WTC11 (cell line): ENCODE measurements at regions of chr7 and their contacts with region 1.

Region 1: DNA sequence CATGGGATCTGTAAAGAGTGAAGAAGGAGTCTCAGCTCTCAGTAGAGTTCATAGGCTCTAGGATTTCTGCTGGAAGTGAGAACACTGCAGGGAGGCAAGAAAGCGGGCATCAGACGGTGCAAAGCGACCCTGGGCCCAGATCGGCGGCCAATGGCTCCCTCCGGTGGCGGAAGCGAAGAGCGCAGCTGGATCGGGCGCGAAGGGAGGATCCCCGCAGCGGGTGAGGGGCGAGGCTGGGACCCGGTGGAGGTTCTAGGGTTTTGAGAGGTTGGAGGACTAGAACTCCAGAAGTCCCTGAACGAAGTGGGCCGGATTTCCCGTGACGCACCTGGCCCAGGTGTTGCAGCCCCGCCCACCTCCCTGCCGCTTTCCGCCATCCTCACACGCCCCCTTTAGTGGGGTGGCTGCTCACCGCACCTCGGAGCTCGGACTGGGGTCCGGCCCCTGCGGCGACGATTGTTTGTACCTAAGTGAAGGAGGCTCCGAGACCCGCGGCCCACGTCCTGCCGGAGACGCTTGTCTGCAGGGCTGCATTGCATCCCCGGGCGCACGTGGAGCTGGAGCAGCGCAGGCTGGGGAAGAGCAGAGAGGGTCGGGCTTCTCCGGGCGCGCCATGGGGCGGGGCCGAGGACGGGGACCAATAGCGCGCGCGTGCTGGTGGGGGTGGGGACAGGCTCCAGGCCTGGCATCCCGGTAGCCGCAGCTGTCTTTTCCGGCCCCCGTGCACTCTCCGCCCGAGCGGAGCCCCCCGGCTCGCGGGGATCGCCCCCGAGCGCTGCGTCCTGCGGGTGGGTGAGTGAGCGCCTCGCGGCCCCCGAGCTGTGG is at the start of gene SLC12A9:
- DNase-seq: peak; percentile 93
- ATAC-seq: peak; percentile 95
- H3K4me3 Mint-ChIP-seq: peak within 1 kb of the TSS; percentile 93
- H3K27ac Mint-ChIP-seq: peak within 1 kb of the TSS; percentile 67
- H3K4me1 Mint-ChIP-seq: 0 out of 2 replicates have a peak, but pooled peaks cover 7% of the 10 kb centered on the region
- H3K27me3 Mint-ChIP-seq: no peaks in the 10 kb centered on the region
- CTCF ChIP-seq: peak; percentile 78
- total RNA-seq, gene SLC12A9: 32.6 to 39.3 TPM (median 34.1 TPM) in 3 replicates

Region 2: GRCh38 chr7:100781255-100781654 is 71.0 kb before region 1 on chr7:
- CTCF ChIA-PET with region 1: interaction called, 10 read pairs
- POLR2A ChIA-PET with region 1: interaction called, 3 read pairs
- DNase-seq: no peak
- ATAC-seq: peak; percentile 62
- H3K4me3 Mint-ChIP-seq: no peak overlapping the region
- H3K27ac Mint-ChIP-seq: no peak overlapping the region
- H3K4me1 Mint-ChIP-seq: peaks cover 12% of the 10 kb centered on the region
- H3K27me3 Mint-ChIP-seq: peaks cover 5% of the 10 kb centered on the region; the same call in 1 of the 2 replicates
- CTCF ChIP-seq: no peak

Region 3: DNA sequence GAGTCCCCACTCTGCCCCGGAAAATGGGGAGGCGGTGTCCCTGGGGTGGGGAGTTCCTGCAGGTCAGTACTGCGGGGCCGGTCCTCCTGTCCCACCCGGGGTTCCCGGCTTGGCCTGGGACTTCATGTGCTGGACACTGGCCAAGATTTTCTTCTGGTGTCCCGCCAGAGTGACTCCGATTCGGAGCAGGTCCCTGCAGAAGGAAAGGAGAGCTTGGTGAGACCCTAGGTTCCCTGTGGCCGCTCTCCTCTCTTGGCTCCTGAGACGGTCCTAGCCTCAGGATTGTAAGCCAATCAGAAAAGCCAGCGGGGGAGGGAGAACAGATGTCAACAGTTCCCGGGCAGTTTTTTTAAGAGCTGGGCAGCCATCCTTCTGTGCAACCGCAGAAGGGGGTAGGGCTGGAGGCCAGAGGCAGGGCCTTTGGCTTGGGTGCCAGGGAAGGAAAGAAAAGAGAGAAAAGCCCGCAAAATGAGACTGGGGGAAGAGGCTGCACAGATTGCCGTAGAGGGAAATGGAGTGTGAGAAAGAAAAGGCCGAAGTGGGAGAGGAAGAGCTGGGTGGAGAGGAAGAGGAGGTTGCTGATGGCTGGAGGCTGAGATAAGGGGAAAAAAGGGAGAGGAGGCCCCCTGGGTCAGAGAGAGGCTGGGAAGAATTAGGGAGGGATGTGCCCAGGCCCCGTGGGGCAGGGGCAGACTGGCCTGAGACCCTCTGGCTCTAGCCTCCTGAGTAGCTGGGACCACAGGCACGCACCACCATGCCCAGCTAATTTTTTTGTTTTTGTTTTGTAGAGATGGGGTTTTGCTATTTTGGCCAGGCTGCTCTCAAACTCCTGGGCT is 48.6 kb before region 1 on chr7:
- CTCF ChIA-PET with region 1: interaction called, 131 read pairs
- POLR2A ChIA-PET with region 1: interaction called, 8 read pairs
- DNase-seq: peak; percentile 59
- ATAC-seq: peak; percentile 21
- H3K4me3 Mint-ChIP-seq: no peak overlapping the region
- H3K27ac Mint-ChIP-seq: peak overlapping the region; percentile 83
- H3K4me1 Mint-ChIP-seq: peaks cover 24% of the 10 kb centered on the region
- H3K27me3 Mint-ChIP-seq: no peaks in the 10 kb centered on the region
- CTCF ChIP-seq: no peak

Region 4: DNA sequence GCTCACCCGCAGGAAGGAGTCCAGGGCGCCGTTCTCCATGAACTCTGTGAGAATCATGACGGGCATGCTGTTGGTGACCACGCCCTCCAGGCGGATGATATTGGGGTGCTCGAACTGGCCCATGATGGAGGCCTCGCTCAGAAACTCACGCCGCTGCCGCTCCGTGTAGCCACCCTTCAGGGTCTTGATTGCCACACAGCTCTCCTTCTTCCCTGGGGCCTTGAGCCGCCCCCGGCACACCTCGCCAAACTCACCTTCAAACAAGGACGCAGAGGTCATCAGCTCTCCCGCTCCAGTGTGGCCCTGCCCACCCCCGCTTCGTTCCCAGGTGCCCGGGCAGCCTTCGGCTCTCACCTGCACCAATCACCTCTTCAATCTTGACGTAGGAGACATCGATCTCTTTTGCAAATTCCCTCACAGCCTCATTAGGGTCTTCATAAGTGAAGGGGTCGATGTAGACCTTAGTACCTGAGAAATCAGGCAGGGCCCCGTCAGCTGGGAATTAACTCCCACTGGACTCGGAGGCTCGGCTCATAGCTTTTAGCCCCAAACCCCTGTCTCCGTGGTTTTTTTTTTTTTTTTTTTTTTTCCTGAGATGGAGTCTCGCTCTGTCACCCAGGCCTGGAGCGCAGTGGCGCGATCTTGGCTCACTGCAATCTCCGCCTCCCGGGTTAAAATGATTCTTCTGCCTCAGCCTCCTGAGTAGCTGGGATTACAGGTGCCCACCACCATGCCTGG is 39.4 kb before region 1 on chr7:
- CTCF ChIA-PET with region 1: interaction called, 11 read pairs
- POLR2A ChIA-PET with region 1: interaction called, 5 read pairs
- DNase-seq: no peak
- ATAC-seq: no peak
- H3K4me3 Mint-ChIP-seq: no peak overlapping the region
- H3K27ac Mint-ChIP-seq: no peak overlapping the region
- H3K4me1 Mint-ChIP-seq: no peaks in the 10 kb centered on the region
- H3K27me3 Mint-ChIP-seq: no peaks in the 10 kb centered on the region
- CTCF ChIP-seq: no peak

Region 5: GRCh38 chr7:100827330-100828227 is 24.7 kb before region 1 on chr7 and contains the start of gene EPHB4:
- CTCF ChIA-PET with region 1: interaction called, 85 read pairs
- POLR2A ChIA-PET with region 1: interaction called, 44 read pairs
- DNase-seq: peak; percentile 90
- ATAC-seq: peak; percentile 82
- H3K4me3 Mint-ChIP-seq: peak within 1 kb of the TSS; percentile 98
- H3K27ac Mint-ChIP-seq: peak within 1 kb of the TSS; percentile 99
- H3K4me1 Mint-ChIP-seq: peaks cover 28% of the 10 kb centered on the region
- H3K27me3 Mint-ChIP-seq: no peaks in the 10 kb centered on the region
- CTCF ChIP-seq: no peak
- total RNA-seq, gene EPHB4: 99.7 to 120 TPM (median 104 TPM) in 3 replicates

Region 6: GRCh38 chr7:100837099-100837836 is 15.0 kb before region 1 on chr7:
- CTCF ChIA-PET with region 1: interaction called, 36 read pairs
- POLR2A ChIA-PET with region 1: interaction called, 11 read pairs
- DNase-seq: peak; percentile 93
- ATAC-seq: peak; percentile 36
- H3K4me3 Mint-ChIP-seq: peak overlapping the region; percentile 77
- H3K27ac Mint-ChIP-seq: peak overlapping the region; percentile 100
- H3K4me1 Mint-ChIP-seq: peaks cover 37% of the 10 kb centered on the region
- H3K27me3 Mint-ChIP-seq: no peaks in the 10 kb centered on the region
- CTCF ChIP-seq: no peak

Region 7: GRCh38 chr7:100874577-100875355 is 22.5 kb after region 1 on chr7 and contains the start of gene SRRT:
- CTCF ChIA-PET with region 1: interaction called, 11 read pairs
- POLR2A ChIA-PET with region 1: interaction called, 8 read pairs
- DNase-seq: peak; percentile 98
- ATAC-seq: peak; percentile 94
- H3K4me3 Mint-ChIP-seq: peak within 1 kb of the TSS; percentile 98
- H3K27ac Mint-ChIP-seq: peak within 1 kb of the TSS; percentile 99
- H3K4me1 Mint-ChIP-seq: peaks cover 19% of the 10 kb centered on the region
- H3K27me3 Mint-ChIP-seq: no peaks in the 10 kb centered on the region
- CTCF ChIP-seq: no peak
- total RNA-seq, gene SRRT: 209 to 238 TPM (median 233 TPM) in 3 replicates

Region 8: DNA sequence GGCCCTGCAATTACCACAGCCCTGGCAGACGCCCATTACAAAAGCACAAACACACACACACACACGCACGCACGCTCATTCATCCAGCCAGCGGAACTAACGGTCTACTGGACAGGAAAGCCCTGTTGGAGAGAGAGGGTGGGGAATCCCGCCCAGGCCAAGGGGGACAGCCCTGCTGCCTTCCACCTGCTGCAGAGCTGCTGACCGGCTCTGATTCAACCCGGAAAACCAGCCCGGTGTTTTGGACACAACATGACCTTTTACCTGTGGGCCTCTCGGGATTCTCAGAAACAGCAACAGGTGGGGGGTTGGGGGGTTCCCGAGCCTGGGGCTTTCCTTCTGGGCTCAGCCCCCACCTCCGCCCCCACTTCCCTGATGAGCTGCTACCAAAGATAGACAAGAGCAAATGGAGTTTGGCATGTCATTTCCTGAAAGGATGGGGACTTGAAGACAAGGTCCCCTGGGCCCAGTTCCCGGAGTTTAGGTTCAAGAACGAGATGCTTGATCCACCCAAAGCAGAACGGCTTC is 256.1 kb after region 1 on chr7:
- CTCF ChIA-PET with region 1: no interaction called
- POLR2A ChIA-PET with region 1: no interaction called
- DNase-seq: no peak
- ATAC-seq: no peak; the same call in 1 of the 2 replicates
- H3K4me3 Mint-ChIP-seq: no peak overlapping the region
- H3K27ac Mint-ChIP-seq: no peak overlapping the region
- H3K4me1 Mint-ChIP-seq: peaks cover 4% of the 10 kb centered on the region; the same call in 1 of the 2 replicates
- H3K27me3 Mint-ChIP-seq: no peaks in the 10 kb centered on the region; the same call in 1 of the 2 replicates
- CTCF ChIP-seq: no peak

Region 9: DNA sequence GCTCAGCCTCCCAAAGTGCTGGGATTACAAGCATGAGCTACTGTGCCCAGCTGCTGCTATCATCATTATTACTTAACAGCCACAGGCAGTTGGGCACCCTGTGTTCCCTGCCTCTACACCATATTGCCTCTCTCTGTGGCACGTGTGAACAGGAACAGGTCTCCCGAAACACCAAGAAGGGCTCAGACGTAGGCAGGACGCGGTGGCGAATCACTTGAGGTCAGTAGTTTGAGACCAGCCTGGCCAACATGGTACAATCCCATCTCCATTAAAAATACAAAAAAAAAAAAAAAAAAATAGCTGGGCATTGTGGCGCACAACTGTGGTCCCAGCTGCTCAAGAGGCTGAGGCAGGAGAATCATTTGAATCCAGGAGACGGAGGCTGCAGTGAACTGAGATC is 290.8 kb after region 1 on chr7:
- CTCF ChIA-PET with region 1: no interaction called
- POLR2A ChIA-PET with region 1: no interaction called
- DNase-seq: no peak
- ATAC-seq: no peak
- H3K4me3 Mint-ChIP-seq: no peak overlapping the region
- H3K27ac Mint-ChIP-seq: no peak overlapping the region
- H3K4me1 Mint-ChIP-seq: peaks cover 27% of the 10 kb centered on the region
- H3K27me3 Mint-ChIP-seq: peaks cover 6% of the 10 kb centered on the region
- CTCF ChIP-seq: no peak